ENCODE measurements at regions of chr15 and their contacts with region 1.

Region 1: GRCh38 chr15:98823012-98823458 is 174.7 kb downstream of the IGF1R start:
- DNase-seq: peak; percentile 96
- ATAC-seq: peak; percentile 98
- H3K4me3 ChIP-seq: no peak overlapping the region; the same call in 1 of the 2 replicates
- H3K27ac ChIP-seq: no peak overlapping the region
- H3K4me1 ChIP-seq: peaks cover 10% of the 10 kb centered on the region
- H3K27me3 ChIP-seq: no peaks in the 10 kb centered on the region
- CTCF ChIP-seq: no peak
- POLR2A ChIP-seq: no peak
- RAD21 ChIP-seq: no peak

Region 2: DNA sequence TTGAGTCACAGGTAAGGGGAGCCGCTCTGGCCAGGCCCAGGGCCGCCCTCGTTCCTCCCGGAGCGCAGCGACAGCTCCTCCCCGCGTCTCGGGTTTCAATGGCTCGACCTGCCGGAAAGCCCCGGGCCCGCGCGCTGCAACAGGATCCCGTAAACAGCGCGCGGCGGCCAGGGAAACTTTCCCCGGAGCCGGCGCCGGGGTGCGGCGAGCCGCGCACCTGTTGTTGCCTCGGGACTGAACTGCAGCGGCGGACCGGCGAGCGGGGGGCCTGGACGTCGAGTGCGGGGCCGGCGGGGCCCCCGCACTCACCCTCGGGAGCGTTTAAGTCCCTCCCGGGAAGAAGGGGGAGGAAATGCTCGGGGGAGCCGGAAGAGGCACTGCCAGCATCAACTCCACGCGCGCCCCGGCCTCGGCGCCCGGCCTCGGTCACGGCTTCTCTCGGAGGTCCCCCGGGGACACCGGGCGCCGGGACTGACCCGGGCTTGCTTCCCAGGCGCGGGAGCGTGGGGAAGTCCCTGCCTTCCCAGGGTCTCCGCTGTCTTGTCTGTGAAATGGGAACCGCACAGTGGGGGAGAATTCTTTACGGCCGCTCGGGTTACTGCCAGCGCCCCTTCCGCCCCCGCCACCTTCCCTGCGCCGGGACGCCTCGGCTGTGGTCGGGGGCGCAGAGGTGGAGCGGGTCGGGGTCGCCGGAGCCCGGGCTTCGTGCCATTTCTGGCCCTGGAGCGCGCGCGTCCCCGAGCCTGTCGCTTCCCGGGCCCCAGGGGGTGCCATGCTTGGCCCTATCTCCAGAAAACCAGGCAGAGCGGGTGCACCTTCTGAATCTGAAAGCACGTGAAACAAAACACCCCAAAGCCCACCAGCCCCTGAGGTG is 192.0 kb after region 1 on chr15:
- CTCF ChIA-PET with region 1: interaction called, 3 read pairs
- POLR2A ChIA-PET with region 1: interaction called, 14 read pairs
- dilution Hi-C with region 1: no loop called
- in situ Hi-C with region 1: no loop called
- intact Hi-C with region 1: no loop called
- DNase-seq: peak; percentile 72
- ATAC-seq: peak; percentile 93
- H3K4me3 ChIP-seq: peak overlapping the region; percentile 47
- H3K27ac ChIP-seq: no peak overlapping the region; the same call in 1 of the 2 replicates
- H3K4me1 ChIP-seq: peaks cover 4% of the 10 kb centered on the region
- H3K27me3 ChIP-seq: peaks cover 2% of the 10 kb centered on the region; the same call in 1 of the 2 replicates
- CTCF ChIP-seq: no peak
- POLR2A ChIP-seq: no peak
- RAD21 ChIP-seq: no peak